ENCODE measurements at regions of chr16 and their contacts with region 1.

Region 1: DNA sequence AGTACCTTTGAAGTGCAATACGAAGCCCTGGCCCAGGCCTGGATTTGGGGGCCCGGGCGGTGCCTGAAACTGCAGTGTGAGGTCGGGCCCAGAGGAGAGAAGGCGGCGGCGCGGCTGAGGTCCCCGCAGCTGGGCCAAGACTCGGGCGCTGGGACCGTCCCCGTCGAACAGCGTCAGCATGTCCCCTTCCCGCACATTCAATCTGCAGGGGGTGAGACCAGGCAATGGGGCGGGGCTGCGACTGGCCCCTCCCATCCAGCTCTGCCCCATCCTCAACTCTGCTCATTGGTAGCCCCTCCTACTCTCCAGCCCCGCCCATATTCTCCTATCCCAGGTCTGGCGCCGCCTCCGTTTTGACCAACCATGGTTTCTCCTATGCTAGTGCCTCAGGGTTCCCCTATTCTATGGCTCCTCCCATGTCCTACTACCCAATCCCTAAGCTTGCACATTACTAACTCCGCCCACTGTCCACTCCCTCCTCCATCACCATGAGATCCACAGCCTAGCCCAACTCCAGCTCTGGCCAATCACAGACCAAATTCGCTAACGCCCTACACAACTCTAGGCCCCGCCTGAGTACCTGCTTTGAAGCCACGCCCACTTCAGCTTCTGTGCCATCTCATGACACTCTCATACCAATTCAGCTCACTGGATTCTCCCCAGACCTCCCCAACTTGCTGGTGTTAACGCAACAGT is 14.4 kb upstream of the CDIPT start:
- DNase-seq: peak; percentile 85
- ATAC-seq: peak; percentile 93
- H3K4me3 Mint-ChIP-seq: peak overlapping the region; percentile 29
- H3K27ac Mint-ChIP-seq: no peak overlapping the region
- H3K4me1 Mint-ChIP-seq: peaks cover 7% of the 10 kb centered on the region
- H3K27me3 Mint-ChIP-seq: peaks cover 22% of the 10 kb centered on the region

Region 2: GRCh38 chr16:29900102-29900887 is 22.9 kb after region 1 on chr16 and contains the start of gene ASPHD1:
- CTCF ChIA-PET with region 1: interaction called, 3 read pairs
- POLR2A ChIA-PET with region 1: no interaction called
- intact Hi-C with region 1: loop called in 1 of 2 experiments (anchors 1 kb)
- DNase-seq: peak; percentile 84
- ATAC-seq: peak; percentile 92
- H3K4me3 Mint-ChIP-seq: peak within 1 kb of the TSS; percentile 74
- H3K27ac Mint-ChIP-seq: peak within 1 kb of the TSS; percentile 38
- H3K4me1 Mint-ChIP-seq: peaks cover 13% of the 10 kb centered on the region
- H3K27me3 Mint-ChIP-seq: peaks cover 21% of the 10 kb centered on the region
- total RNA-seq, gene ASPHD1: 2.7 to 3.2 TPM

Region 3: GRCh38 chr16:29926005-29926710 is 48.7 kb after region 1 on chr16 and contains the start of gene KCTD13:
- CTCF ChIA-PET with region 1: interaction called, 4 read pairs
- POLR2A ChIA-PET with region 1: no interaction called
- intact Hi-C with region 1: loop called in 1 of 2 experiments (anchors 1 kb)
- DNase-seq: peak; percentile 92
- ATAC-seq: peak; percentile 90
- H3K4me3 Mint-ChIP-seq: peak within 1 kb of the TSS; percentile 82
- H3K27ac Mint-ChIP-seq: peak within 1 kb of the TSS; percentile 95
- H3K4me1 Mint-ChIP-seq: peaks cover 32% of the 10 kb centered on the region
- H3K27me3 Mint-ChIP-seq: no peaks in the 10 kb centered on the region
- total RNA-seq, gene KCTD13: 30.4 to 33.4 TPM

Region 4: GRCh38 chr16:30024451-30024850 is 147.0 kb after region 1 on chr16:
- CTCF ChIA-PET with region 1: interaction called, 3 read pairs
- POLR2A ChIA-PET with region 1: no interaction called
- intact Hi-C with region 1: loop called in 1 of 2 experiments (anchors 5 kb)
- DNase-seq: no peak
- ATAC-seq: no peak
- H3K4me3 Mint-ChIP-seq: no peak overlapping the region
- H3K27ac Mint-ChIP-seq: no peak overlapping the region
- H3K4me1 Mint-ChIP-seq: peaks cover 7% of the 10 kb centered on the region
- H3K27me3 Mint-ChIP-seq: peaks cover 25% of the 10 kb centered on the region